Psoas muscle (tissue), 8 donors: ENCODE measurements at regions of chr2 and their contacts with region 1.

Region 1: GRCh38 chr2:178480227-178481181 is at the start of gene PLEKHA3:
- DNase-seq: peak; percentile 97 to 98
- ATAC-seq: peak; percentile 85 to 92 (median 87)
- H3K4me3 ChIP-seq: peak within 1 kb of the TSS; percentile 85
- H3K27ac ChIP-seq: peak within 1 kb of the TSS; percentile 88
- H3K4me1 ChIP-seq: peaks cover 48% of the 10 kb centered on the region
- H3K27me3 ChIP-seq: no peaks in the 10 kb centered on the region
- CTCF ChIP-seq: no peak
- total RNA-seq, gene PLEKHA3: 13.5 to 22.5 (median 17.6) TPM

Region 2: DNA sequence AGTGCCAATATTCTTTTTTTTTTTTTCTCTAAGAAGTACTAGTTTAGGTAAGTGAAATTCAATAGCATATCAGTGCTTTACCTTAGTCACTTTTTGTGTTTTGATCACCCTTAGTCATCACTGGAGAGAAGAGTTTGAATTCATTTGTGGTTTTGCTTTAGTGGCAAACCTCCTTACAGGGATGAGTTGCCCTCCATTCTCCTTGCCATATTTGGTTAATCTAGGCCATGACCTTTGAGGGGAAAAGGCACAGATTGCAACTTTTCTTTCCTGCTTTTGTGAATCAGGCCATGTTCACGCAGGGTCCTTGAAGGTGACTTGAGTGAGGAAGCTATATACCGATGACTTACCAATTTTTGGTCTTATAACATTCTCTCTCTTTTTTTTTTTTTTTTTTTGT is 34.2 kb after region 1 on chr2:
- intact Hi-C with region 1: loop called in 1 of 2 experiments (anchors 5 kb)
- DNase-seq: no peak
- ATAC-seq: no peak
- H3K4me3 ChIP-seq: no peak overlapping the region
- H3K27ac ChIP-seq: no peak overlapping the region
- H3K4me1 ChIP-seq: no peaks in the 10 kb centered on the region
- H3K27me3 ChIP-seq: no peaks in the 10 kb centered on the region
- CTCF ChIP-seq: no peak

Region 3: GRCh38 chr2:178650554-178650953 is 170.1 kb after region 1 on chr2:
- intact Hi-C with region 1: no loop called
- DNase-seq: no peak
- ATAC-seq: peak; percentile 63 to 77 (median 72)
- H3K4me3 ChIP-seq: no peak overlapping the region
- H3K27ac ChIP-seq: peak overlapping the region; percentile 79
- H3K4me1 ChIP-seq: peaks cover 24% of the 10 kb centered on the region
- H3K27me3 ChIP-seq: no peaks in the 10 kb centered on the region
- CTCF ChIP-seq: no peak